ENCODE measurements at regions of chr13 and their contacts with region 1.

Region 1: DNA sequence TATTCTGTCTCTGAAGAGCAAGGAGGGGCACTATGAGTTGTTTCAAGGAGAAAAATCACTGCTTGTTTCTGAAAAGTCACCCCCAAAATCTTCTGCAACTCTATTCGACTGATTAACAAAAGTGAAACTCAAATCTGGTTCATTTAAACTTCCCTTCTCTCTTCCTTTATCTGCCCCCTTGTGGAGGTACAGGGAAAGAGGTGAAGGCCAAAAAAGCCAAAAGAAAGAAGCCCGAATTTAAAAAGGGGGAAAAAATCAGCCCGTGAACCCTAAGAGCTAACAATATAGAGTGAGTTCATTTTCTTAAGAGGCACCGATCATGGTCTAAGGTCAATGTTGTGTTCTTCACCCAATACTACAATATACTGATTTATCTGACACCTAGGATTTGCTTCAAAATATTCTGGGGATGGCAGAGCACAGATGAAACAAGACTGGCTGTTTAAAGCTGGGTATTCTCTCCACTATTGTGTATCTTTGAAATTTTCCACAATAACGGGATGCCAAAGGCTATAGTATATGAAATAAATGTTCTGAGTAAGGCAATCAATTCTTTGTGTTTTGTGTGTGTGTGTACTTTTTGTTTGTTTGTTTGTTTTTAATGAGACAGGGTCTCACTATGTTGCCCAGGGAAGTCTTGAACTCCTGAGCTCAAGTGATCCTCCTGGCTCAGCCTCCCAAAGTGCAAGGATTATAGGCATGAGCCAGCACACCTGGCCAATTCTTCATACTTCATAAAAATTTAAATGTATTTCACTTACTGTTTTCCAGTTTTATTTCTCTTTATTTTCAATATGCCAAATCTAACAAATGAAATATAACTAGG is 55.0 kb upstream of the EEF1AKMT1 start:
- DNase-seq: peak; percentile 27
- H3K4me3 ChIP-seq: peak overlapping the region; percentile 13 to 45; a peak in 3 of 4 replicates
- H3K27ac ChIP-seq: peak overlapping the region in 1 of 2 experiments; percentile 31; a peak in 1 of 4 replicates
- H3K4me1 ChIP-seq: peaks cover 0 to 29% of the 10 kb centered on the region in 2 experiments; a peak in 3 of 4 replicates
- H3K27me3 ChIP-seq: no peaks in the 10 kb centered on the region
- CTCF ChIP-seq: peak; percentile 85
- EP300 ChIP-seq: no peak
- RAD21 ChIP-seq: peak; percentile 77

Region 2: GRCh38 chr13:20702915-20703779 is 125.6 kb before region 1 on chr13 and contains the start of gene IL17D:
- CTCF ChIA-PET with region 1: interaction called, 18 read pairs
- POLR2A ChIA-PET with region 1: interaction called, 3 read pairs
- DNase-seq: peak; percentile 76
- H3K4me3 ChIP-seq: peak within 1 kb of the TSS; percentile 70 to 86
- H3K27ac ChIP-seq: peak within 1 kb of the TSS in 1 of 2 experiments; percentile 46; a peak in 1 of 4 replicates
- H3K4me1 ChIP-seq: peaks cover 5 to 9% of the 10 kb centered on the region in 2 experiments; a peak in 2 of 4 replicates
- H3K27me3 ChIP-seq: no peaks in the 10 kb centered on the region
- CTCF ChIP-seq: peak; percentile 11
- EP300 ChIP-seq: no peak
- RAD21 ChIP-seq: no peak
- polyA plus RNA-seq, gene IL17D: 1.6 and 2.3 TPM in 2 replicates

Region 3: GRCh38 chr13:20721454-20722357 is 107.0 kb before region 1 on chr13:
- CTCF ChIA-PET with region 1: interaction called, 76 read pairs
- POLR2A ChIA-PET with region 1: no interaction called
- DNase-seq: peak; percentile 67
- H3K4me3 ChIP-seq: peak overlapping the region; percentile 33 to 46; a peak in 3 of 4 replicates
- H3K27ac ChIP-seq: no peak overlapping the region
- H3K4me1 ChIP-seq: peaks cover 0 to 4% of the 10 kb centered on the region in 2 experiments; a peak in 2 of 4 replicates
- H3K27me3 ChIP-seq: no peaks in the 10 kb centered on the region
- CTCF ChIP-seq: no peak
- EP300 ChIP-seq: 0 out of 4 replicates have a peak, but pooled peaks of 1 of the 2 experiments have one; percentile 11
- RAD21 ChIP-seq: 0 out of 2 replicates have a peak, but pooled peaks have one; percentile 7

Region 4: GRCh38 chr13:20787180-20787579 is 41.6 kb before region 1 on chr13:
- CTCF ChIA-PET with region 1: interaction called, 11 read pairs
- POLR2A ChIA-PET with region 1: no interaction called
- DNase-seq: no peak
- H3K4me3 ChIP-seq: no peak overlapping the region
- H3K27ac ChIP-seq: no peak overlapping the region
- H3K4me1 ChIP-seq: peaks cover under 1 to 4% of the 10 kb centered on the region in 2 experiments; a peak in 3 of 4 replicates
- H3K27me3 ChIP-seq: no peaks in the 10 kb centered on the region
- CTCF ChIP-seq: no peak
- EP300 ChIP-seq: no peak
- RAD21 ChIP-seq: no peak

Region 5: GRCh38 chr13:20840568-20840967 is 11.8 kb after region 1 on chr13:
- CTCF ChIA-PET with region 1: interaction called, 25 read pairs
- POLR2A ChIA-PET with region 1: no interaction called
- DNase-seq: no peak
- H3K4me3 ChIP-seq: no peak overlapping the region
- H3K27ac ChIP-seq: no peak overlapping the region
- H3K4me1 ChIP-seq: no peaks in the 10 kb centered on the region; a peak in 1 of 4 replicates
- H3K27me3 ChIP-seq: no peaks in the 10 kb centered on the region
- CTCF ChIP-seq: no peak
- EP300 ChIP-seq: no peak
- RAD21 ChIP-seq: no peak

Region 6: DNA sequence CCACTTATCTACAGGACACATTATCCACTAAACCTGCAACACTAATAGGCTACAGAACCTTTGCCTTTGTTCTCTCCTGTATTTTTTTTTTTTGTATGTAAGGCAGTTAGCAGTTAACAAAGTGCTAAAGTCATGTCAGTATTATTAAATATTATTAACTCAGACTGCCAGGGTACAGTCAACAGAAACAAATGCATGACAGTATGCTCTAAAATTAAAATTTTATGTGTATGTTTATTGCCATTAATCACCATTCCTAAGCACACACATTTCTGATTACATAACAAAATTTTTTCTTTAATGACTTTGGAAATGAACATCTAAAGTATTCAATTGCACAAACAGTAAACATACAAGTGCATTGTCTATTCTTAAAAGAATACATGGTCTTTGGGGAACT is 32.1 kb after region 1 on chr13:
- CTCF ChIA-PET with region 1: interaction called, 13 read pairs
- POLR2A ChIA-PET with region 1: no interaction called
- DNase-seq: no peak
- H3K4me3 ChIP-seq: no peak overlapping the region
- H3K27ac ChIP-seq: no peak overlapping the region
- H3K4me1 ChIP-seq: peaks cover 0 to 3% of the 10 kb centered on the region in 2 experiments; a peak in 1 of 4 replicates
- H3K27me3 ChIP-seq: no peaks in the 10 kb centered on the region
- CTCF ChIP-seq: no peak
- EP300 ChIP-seq: no peak
- RAD21 ChIP-seq: no peak

Region 7: DNA sequence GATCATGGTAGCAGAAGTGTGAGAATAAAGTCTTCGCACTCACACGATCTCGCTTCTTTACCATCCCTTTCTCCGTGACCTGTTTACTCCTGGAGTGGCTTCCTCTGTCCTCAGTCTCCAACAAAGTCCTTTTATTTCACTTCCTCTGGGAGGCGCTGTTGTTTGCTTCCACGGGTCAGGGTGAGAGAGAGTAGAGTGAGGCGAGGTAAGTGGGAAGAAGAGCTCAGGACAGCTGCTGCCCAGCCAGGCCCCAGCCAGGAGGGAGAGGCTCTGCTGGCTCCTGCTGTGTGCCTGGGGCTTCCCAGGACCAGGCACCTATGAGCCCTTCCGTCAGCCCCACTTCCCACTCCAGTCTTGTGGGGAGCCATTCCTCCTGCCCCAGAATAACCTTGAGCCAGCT is 1084.3 kb after region 1 on chr13:
- CTCF ChIA-PET with region 1: no interaction called
- POLR2A ChIA-PET with region 1: no interaction called
- DNase-seq: no peak
- H3K4me3 ChIP-seq: no peak overlapping the region
- H3K27ac ChIP-seq: no peak overlapping the region
- H3K4me1 ChIP-seq: no peaks in the 10 kb centered on the region
- H3K27me3 ChIP-seq: peaks cover 2% of the 10 kb centered on the region; the same call in 1 of the 2 replicates
- CTCF ChIP-seq: 0 out of 2 replicates have a peak, but pooled peaks have one; percentile 8
- EP300 ChIP-seq: no peak
- RAD21 ChIP-seq: no peak